ENCODE measurements at regions of chr18 and their contacts with region 1.

Region 1: DNA sequence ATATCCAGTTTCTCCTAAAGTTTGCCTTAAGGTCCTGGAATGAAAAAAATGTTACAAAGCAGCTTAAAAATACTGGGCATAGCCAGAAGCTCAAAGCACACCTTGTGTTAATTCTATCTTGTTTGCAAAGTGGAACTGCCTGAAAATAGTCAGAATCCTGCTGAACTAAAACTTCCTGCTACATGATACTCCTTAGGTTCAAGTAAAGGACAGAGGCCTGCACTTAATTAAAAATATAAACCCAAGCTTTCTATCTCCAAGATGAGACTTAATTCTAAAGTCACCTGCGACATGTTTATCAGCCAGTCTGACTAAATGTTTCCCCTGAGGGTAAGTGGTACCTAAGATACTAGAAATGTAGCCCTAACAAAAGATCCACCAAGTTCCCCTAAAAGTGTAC is 103.4 kb downstream of the CHST9 start:
- DNase-seq: no peak
- H3K4me3 Mint-ChIP-seq: no peak overlapping the region
- H3K27ac Mint-ChIP-seq: no peak overlapping the region
- H3K4me1 Mint-ChIP-seq: peaks cover 59% of the 10 kb centered on the region
- H3K27me3 Mint-ChIP-seq: no peaks in the 10 kb centered on the region
- CTCF ChIP-seq: no peak

Region 2: DNA sequence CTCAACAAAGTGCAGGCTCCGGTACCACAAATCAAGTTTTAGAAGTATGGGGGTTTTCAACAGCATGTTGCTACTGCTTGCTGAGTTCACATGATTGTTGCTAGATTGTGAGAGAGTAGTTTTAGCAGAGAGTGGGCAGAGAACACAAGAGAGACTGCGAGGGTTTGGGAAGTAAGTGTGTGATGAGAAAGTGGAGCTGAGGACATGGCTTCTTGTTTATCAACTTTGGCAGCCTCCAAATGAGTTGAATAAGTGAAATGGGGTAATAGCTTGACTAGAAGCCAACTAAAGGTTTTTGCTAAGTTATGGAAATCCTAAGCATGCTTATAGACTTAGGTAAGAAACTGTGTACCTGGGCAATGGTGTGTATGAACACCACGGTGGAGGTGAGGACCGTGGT is 31.7 kb before region 1 on chr18:
- CTCF ChIA-PET with region 1: no interaction called
- intact Hi-C with region 1: loop called (anchors 2 kb)
- DNase-seq: no peak
- H3K4me3 Mint-ChIP-seq: no peak overlapping the region
- H3K27ac Mint-ChIP-seq: no peak overlapping the region
- H3K4me1 Mint-ChIP-seq: no peaks in the 10 kb centered on the region
- H3K27me3 Mint-ChIP-seq: no peaks in the 10 kb centered on the region
- CTCF ChIP-seq: no peak

Region 3: DNA sequence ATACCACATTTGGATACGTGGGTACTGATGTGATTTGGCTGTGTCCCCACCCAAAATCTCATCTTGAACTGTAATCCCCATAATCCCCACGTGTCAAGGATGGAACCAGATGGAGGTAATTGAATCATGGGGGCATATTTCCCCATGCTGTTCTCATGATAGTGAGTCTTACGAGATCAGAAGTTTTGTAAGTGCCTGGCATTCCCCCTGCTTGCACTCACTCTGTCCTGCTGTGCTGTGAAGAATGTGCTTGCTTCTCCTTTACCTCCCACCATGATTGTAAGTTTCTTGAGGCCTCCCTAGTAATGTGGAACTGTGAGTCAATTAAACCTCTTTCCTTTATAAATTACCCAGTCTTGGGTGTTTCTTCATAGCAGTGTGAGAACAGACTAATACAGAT is 33.1 kb after region 1 on chr18:
- CTCF ChIA-PET with region 1: no interaction called
- intact Hi-C with region 1: loop called (anchors 5 kb)
- DNase-seq: no peak
- H3K4me3 Mint-ChIP-seq: no peak overlapping the region
- H3K27ac Mint-ChIP-seq: no peak overlapping the region
- H3K4me1 Mint-ChIP-seq: peaks cover 28% of the 10 kb centered on the region
- H3K27me3 Mint-ChIP-seq: no peaks in the 10 kb centered on the region
- CTCF ChIP-seq: no peak

Region 4: DNA sequence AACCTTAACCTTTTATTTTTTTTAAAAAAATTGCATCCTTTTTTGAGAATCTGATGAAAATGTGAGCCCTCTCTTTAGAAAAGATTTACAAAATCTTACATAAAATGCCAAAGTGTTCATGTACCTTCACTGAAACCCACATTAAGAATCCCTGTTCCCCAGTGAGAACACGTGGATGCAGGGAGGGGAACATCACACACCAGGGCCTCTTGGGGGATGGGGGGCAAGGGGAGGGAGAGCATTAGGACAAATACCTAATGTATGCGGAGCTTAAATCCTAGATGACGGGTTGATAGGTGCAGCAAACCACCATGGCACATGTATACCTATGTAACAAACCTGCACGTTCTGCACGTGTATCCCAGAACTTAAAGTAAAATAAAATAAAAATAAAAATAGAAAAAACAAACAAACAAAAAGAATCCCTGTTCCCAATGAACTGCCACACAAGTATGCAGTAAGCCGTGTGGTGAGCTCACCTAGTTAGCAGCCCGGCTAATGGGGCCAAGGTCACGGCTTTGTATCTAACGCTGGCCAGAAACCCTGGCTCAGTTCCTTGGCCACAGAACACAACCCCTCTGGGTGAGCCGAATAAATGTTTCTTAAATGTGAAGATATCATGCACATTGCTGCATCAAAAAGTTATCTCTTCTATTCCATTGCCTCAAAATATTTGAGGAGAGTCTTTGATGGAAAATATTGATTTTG is 62.0 kb after region 1 on chr18:
- CTCF ChIA-PET with region 1: no interaction called
- intact Hi-C with region 1: loop called (anchors 2 kb)
- DNase-seq: peak; percentile 56
- H3K4me3 Mint-ChIP-seq: peak overlapping the region; percentile 14
- H3K27ac Mint-ChIP-seq: peak overlapping the region; percentile 72
- H3K4me1 Mint-ChIP-seq: peaks cover 26% of the 10 kb centered on the region
- H3K27me3 Mint-ChIP-seq: no peaks in the 10 kb centered on the region
- CTCF ChIP-seq: no peak